ENCODE measurements at regions of chr4 and their contacts with region 1.

Region 1: DNA sequence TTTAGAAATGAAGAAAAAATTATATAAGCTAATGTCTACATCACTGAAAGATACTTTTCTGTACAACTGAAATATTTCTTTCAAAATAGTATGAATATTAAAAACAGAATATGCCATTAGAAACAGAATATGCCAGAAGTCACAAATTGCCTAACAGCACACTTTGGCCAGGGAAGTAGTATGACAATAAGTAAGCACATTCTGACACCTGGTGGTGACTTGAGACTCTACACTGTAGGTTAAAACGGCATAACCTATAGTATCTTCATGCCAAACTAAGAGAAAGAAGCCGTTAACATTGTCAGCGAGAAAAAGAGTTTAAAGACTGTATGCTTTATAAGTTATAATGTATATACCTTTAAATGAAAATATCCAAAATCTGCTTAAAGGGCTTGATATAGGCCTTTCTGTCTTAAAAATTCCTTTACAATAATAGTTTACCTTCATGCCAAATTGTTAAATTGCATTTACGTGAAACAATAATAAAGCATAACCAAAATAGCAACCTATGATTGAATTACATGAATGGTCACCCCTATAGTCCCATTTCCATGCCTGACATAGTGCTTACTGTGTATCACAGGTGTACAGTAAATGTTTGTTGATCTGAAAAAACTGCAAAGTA is 32.8 kb downstream of the FAM13A start:
- DNase-seq: peak in 1 of 2 donors; percentile 87
- ATAC-seq: peak; percentile 92 to 99 (median 98)
- H3K4me3 ChIP-seq: no peak overlapping the region
- H3K4me3 Mint-ChIP-seq: no peak overlapping the region
- H3K27ac ChIP-seq: no peak overlapping the region
- H3K27ac Mint-ChIP-seq: no peak overlapping the region
- H3K4me1 ChIP-seq: no peaks in the 10 kb centered on the region
- H3K4me1 Mint-ChIP-seq: no peaks in the 10 kb centered on the region
- H3K27me3 ChIP-seq: no peaks in the 10 kb centered on the region
- H3K27me3 Mint-ChIP-seq: no peaks in the 10 kb centered on the region
- CTCF ChIP-seq: peak; percentile 77

Region 2: DNA sequence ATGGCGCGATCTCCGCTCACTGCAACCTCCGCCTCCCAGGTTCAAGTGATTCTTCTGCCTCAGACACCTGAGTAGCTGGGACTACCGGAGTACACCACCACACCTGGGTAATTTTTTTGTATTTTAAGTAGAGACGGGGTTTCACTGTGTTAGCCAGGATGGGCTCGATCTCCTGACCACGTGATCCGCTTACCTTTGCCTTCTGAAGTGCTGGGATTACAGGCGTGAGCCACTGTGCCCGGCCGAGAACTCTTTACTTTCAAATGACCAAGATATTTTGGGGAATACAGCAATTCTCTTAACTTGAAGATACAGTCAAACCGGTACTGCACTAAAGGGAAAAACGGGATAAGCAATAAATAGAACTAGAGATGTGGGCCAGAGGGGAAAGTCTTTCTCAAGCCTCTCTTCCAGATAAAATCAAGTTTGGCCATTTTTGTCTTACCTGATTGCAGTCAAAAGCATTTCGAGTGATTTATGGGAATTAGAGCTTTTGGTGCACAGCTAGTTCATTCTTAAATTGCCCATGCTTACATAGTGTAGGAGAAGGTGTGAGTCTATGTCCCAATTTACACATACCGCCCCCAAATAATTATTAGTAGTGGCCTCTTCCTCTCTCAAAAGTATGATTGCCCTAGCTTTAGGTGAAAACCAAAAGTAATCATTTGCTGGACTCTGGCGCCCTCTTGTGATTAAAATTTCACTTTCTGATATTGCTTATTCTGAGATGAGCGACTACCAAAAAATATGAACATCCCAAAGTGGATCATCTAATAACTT is 812.5 kb before region 1 on chr4:
- intact Hi-C with region 1: loop called (anchors 10 kb)
- DNase-seq: peak in 1 of 2 donors; percentile 76
- ATAC-seq: peak; percentile 64 to 68 (median 67)
- H3K4me3 ChIP-seq: no peak overlapping the region
- H3K4me3 Mint-ChIP-seq: no peak overlapping the region
- H3K27ac ChIP-seq: no peak overlapping the region
- H3K27ac Mint-ChIP-seq: no peak overlapping the region
- H3K4me1 ChIP-seq: no peaks in the 10 kb centered on the region
- H3K4me1 Mint-ChIP-seq: peaks cover 0 to 4% of the 10 kb centered on the region in 2 donors
- H3K27me3 ChIP-seq: no peaks in the 10 kb centered on the region
- H3K27me3 Mint-ChIP-seq: peaks cover 6 to 10% of the 10 kb centered on the region in 2 donors
- CTCF ChIP-seq: peak; percentile 75

Region 3: GRCh38 chr4:88526221-88526815 is 497.8 kb before region 1 on chr4:
- intact Hi-C with region 1: loop called (anchors 1 kb)
- DNase-seq: peak in 1 of 2 donors; percentile 53
- ATAC-seq: no peak
- H3K4me3 ChIP-seq: no peak overlapping the region
- H3K4me3 Mint-ChIP-seq: peak overlapping the region; percentile 40
- H3K27ac ChIP-seq: no peak overlapping the region
- H3K27ac Mint-ChIP-seq: peak overlapping the region; percentile 31 to 50
- H3K4me1 ChIP-seq: peaks cover 17% of the 10 kb centered on the region
- H3K4me1 Mint-ChIP-seq: peaks cover 22 to 24% of the 10 kb centered on the region in 2 donors
- H3K27me3 ChIP-seq: no peaks in the 10 kb centered on the region
- H3K27me3 Mint-ChIP-seq: no peaks in the 10 kb centered on the region
- CTCF ChIP-seq: peak; percentile 23

Region 4: GRCh38 chr4:88533937-88534750 is 490.0 kb before region 1 on chr4:
- intact Hi-C with region 1: loop called (anchors 1 kb)
- DNase-seq: no peak
- ATAC-seq: no peak
- H3K4me3 ChIP-seq: no peak overlapping the region
- H3K4me3 Mint-ChIP-seq: no peak overlapping the region
- H3K27ac ChIP-seq: no peak overlapping the region
- H3K27ac Mint-ChIP-seq: no peak overlapping the region
- H3K4me1 ChIP-seq: peaks cover under 1% of the 10 kb centered on the region
- H3K4me1 Mint-ChIP-seq: peaks cover 0 to under 1% of the 10 kb centered on the region in 2 donors
- H3K27me3 ChIP-seq: no peaks in the 10 kb centered on the region
- H3K27me3 Mint-ChIP-seq: peaks cover 0 to 3% of the 10 kb centered on the region in 2 donors
- CTCF ChIP-seq: no peak

Region 5: DNA sequence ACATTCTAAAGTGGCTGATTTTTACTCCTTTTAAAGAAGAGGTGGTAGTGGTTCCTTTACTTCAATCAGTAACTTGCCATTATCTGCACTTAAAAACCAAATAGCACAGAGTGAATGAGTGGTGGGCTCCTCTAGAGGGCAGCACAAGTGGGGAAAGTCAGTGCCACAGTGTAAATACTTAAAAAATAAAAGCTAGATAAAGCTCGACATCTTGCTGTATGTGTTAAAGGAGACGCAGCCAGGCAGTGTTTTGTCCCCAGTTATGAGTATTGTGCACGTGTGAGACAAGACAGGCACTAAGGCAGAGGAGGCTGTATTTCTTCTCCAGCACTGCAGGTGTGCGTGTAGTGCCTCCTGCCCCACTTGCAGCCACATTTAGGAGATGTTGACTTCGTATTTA is 351.2 kb before region 1 on chr4:
- intact Hi-C with region 1: loop called (anchors 2 kb)
- DNase-seq: peak in 1 of 2 donors; percentile 55
- ATAC-seq: peak; percentile 57 to 66 (median 59)
- H3K4me3 ChIP-seq: no peak overlapping the region
- H3K4me3 Mint-ChIP-seq: no peak overlapping the region
- H3K27ac ChIP-seq: no peak overlapping the region
- H3K27ac Mint-ChIP-seq: no peak overlapping the region
- H3K4me1 ChIP-seq: no peaks in the 10 kb centered on the region
- H3K4me1 Mint-ChIP-seq: peaks cover 4 to 5% of the 10 kb centered on the region in 2 donors
- H3K27me3 ChIP-seq: no peaks in the 10 kb centered on the region
- H3K27me3 Mint-ChIP-seq: no peaks in the 10 kb centered on the region
- CTCF ChIP-seq: peak; percentile 43